Mucosa of descending colon (tissue), 3 donors: ENCODE measurements at regions of chr21 and their contacts with region 1.

Region 1: GRCh38 chr21:45981151-45982089 is at the start of gene COL6A1:
- DNase-seq: peak; percentile 63 to 82 (median 78)
- ATAC-seq: peak; percentile 65
- H3K4me3 ChIP-seq: peak within 1 kb of the TSS; percentile 22
- H3K4me1 ChIP-seq: peaks cover 11% of the 10 kb centered on the region
- CTCF ChIP-seq: no peak
- total RNA-seq, gene COL6A1: 45.0 to 663 (median 114) TPM

Region 2: DNA sequence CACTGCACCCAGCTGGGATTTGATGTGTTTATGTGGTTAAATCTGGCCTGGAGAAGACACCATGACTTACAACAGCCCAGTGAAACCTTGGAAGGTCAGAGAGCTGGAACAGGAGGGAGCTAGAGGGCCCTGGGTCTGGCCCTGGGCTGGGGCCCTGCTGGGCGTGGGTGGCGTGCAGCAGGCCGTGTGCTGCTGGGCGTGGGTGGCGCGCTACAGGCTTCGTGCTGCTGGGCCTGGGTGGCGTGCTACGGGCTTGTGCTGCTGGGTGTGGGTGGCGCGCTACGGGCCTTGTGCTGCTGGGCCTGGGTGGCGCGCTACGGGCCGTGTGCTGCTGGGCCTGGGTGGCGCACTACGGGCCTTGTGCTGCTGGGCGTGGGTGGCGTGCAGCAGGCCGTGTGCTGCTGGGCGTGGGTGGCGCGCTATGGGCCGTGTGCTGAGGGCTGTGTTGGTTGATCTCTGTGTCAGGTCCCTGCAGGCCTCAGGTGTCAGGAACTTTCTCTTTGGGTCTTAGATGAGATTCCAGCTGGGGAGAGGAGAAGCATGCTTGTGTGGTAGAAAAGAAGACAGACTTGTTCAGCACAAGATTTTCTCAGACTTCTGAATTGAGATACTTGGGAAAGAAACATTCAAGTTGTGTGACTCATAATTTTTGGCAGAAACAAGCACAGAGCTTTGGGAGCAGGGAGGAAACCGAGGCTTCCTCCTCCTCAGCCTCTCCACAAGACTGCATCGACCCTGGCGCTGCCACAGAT is 510.5 kb before region 1 on chr21:
- intact Hi-C with region 1: no loop called
- DNase-seq: peak in 2 of 3 donors; percentile 28 to 56
- ATAC-seq: peak; percentile 62
- H3K4me3 ChIP-seq: no peak overlapping the region
- H3K4me1 ChIP-seq: peaks cover 8% of the 10 kb centered on the region
- CTCF ChIP-seq: no peak

Region 3: GRCh38 chr21:45948576-45949141 is 32.8 kb before region 1 on chr21:
- intact Hi-C with region 1: no loop called
- DNase-seq: no peak
- ATAC-seq: no peak
- H3K4me3 ChIP-seq: no peak overlapping the region
- H3K4me1 ChIP-seq: no peaks in the 10 kb centered on the region
- CTCF ChIP-seq: no peak

Region 4: GRCh38 chr21:46097336-46098293 is 116.2 kb after region 1 on chr21 and contains the start of gene COL6A2:
- intact Hi-C with region 1: loop called in 1 of 2 experiments (anchors 2 kb)
- DNase-seq: peak; percentile 46 to 68 (median 61)
- ATAC-seq: peak; percentile 81
- H3K4me3 ChIP-seq: peak within 1 kb of the TSS; percentile 40
- H3K4me1 ChIP-seq: no peaks in the 10 kb centered on the region
- CTCF ChIP-seq: no peak
- total RNA-seq, gene COL6A2: 65.1 to 858 (median 191) TPM